ENCODE measurements at regions of chr9 and their contacts with region 1.

Region 1: DNA sequence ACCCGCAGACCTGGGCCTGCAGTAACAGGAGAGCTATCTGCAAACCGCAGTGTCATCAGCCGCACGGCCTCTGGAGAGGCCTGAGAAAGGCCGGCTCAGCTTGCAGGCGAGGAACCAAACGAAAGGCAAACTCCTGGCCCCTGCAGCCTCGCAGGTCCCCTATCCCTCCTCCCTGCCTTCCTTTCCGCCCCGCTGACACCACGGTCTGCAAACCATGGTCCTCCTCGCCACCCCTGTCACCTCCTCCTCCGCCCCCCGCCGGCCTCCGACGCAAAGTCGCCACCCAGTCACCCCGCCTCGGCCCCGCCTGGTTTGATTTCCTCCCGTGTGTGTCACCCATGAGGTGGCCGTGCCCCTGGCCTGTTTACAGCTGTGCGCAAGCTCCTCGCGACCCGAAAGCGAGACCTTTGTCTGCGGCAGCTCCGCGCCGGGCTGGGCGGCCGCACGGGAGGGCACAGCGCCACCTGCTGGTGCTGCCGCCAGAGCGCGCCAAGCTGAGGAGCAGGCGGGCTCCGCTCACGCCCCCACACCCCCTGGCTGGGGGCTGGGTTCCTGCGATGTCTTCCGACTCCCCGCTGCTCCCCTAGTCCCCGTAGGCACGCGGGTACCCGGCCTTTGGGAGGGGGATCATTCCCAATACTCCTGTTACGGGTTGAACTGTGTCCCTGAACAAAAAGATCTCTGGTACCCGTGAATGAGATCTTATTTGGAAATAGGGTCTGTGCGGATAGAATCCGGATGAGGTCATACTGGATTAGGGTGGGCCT is 19.4 kb downstream of the GBGT1 start:
- DNase-seq: peak; percentile 96
- H3K4me3 Mint-ChIP-seq: peak overlapping the region; percentile 64
- H3K27ac Mint-ChIP-seq: peak overlapping the region; percentile 93
- H3K4me1 Mint-ChIP-seq: peaks cover 83% of the 10 kb centered on the region
- H3K27me3 Mint-ChIP-seq: peaks cover 5% of the 10 kb centered on the region

Region 2: GRCh38 chr9:133030317-133031129 is 113.8 kb before region 1 on chr9 and contains the start of gene GTF3C5:
- CTCF ChIA-PET with region 1: interaction called, 14 read pairs
- DNase-seq: peak; percentile 95
- H3K4me3 Mint-ChIP-seq: peak within 1 kb of the TSS; percentile 96
- H3K27ac Mint-ChIP-seq: peak within 1 kb of the TSS; percentile 92
- H3K4me1 Mint-ChIP-seq: peaks cover 69% of the 10 kb centered on the region
- H3K27me3 Mint-ChIP-seq: peaks cover 4% of the 10 kb centered on the region

Region 3: DNA sequence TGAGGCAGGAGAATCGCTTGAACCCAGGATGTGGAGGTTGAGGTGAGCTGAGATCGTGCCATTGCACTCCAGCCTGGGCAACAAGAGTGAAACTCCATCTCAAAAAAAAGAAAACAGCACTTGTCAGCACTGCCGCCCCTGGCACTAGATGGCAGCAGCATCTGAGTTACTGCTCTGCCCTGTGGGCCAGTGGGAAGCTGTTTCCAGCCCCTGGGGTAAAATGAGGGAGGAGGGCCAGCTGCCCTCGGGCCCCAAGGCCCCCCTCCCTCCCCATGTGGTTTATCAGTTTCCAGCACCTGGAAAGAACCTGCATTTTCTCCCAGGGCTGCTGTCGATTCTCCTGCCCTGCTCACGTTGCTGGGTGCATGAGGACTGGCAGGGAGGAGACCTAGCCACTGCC is 95.8 kb before region 1 on chr9:
- CTCF ChIA-PET with region 1: interaction called, 39 read pairs
- DNase-seq: peak; percentile 71
- H3K4me3 Mint-ChIP-seq: no peak overlapping the region
- H3K27ac Mint-ChIP-seq: no peak overlapping the region
- H3K4me1 Mint-ChIP-seq: peaks cover 2% of the 10 kb centered on the region
- H3K27me3 Mint-ChIP-seq: no peaks in the 10 kb centered on the region

Region 4: DNA sequence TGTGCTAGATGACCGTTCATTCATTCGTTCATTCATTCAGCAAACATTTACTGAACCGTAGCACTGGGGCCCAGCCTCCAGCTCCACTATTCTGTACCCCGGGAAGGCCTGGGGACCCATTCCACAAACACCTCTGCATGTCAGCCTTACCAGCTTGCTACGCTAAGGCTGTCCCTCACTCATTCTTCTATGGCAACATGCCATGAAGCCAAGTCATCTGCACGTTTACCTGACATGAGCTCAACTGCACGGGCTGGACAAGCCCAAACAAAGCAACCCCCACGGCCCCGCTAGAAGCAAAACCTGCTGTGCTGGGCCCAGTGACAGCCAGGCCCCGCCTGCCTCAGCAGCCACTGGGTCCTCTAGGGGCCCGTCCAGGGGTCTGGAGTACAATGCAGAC is 76.5 kb before region 1 on chr9:
- CTCF ChIA-PET with region 1: no interaction called
- DNase-seq: no peak
- H3K4me3 Mint-ChIP-seq: no peak overlapping the region
- H3K27ac Mint-ChIP-seq: no peak overlapping the region
- H3K4me1 Mint-ChIP-seq: peaks cover 5% of the 10 kb centered on the region
- H3K27me3 Mint-ChIP-seq: no peaks in the 10 kb centered on the region

Region 5: GRCh38 chr9:133121198-133121939 is 23.0 kb before region 1 on chr9 and contains the start of gene RALGDS:
- CTCF ChIA-PET with region 1: interaction called, 357 read pairs
- DNase-seq: peak; percentile 92
- H3K4me3 Mint-ChIP-seq: peak within 1 kb of the TSS; percentile 72
- H3K27ac Mint-ChIP-seq: peak within 1 kb of the TSS; percentile 91
- H3K4me1 Mint-ChIP-seq: peaks cover 76% of the 10 kb centered on the region
- H3K27me3 Mint-ChIP-seq: no peaks in the 10 kb centered on the region

Region 6: DNA sequence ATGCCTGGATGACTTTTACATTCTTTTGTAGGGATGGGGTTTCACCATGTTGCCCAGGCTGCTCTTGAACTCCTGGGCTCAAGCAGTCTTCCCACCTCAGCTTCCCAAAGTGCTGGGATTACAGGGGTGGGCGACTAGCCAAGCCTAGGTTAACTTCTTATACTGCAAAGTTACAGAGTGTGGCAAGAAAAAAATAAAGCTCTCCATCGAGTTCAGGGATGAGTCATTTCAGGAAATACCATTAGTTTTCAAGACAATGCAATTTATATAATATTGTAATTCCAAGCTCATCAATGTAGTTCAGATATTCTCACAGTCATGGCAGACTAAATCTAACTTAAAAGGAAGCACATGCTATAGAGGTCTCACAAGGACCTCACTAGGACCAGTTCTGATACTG is 142.2 kb after region 1 on chr9:
- CTCF ChIA-PET with region 1: no interaction called
- DNase-seq: no peak
- H3K4me3 Mint-ChIP-seq: no peak overlapping the region
- H3K27ac Mint-ChIP-seq: no peak overlapping the region
- H3K4me1 Mint-ChIP-seq: no peaks in the 10 kb centered on the region
- H3K27me3 Mint-ChIP-seq: peaks cover 4% of the 10 kb centered on the region